Heart left ventricle (tissue), 16 donors: ENCODE measurements at regions of chr17 and their contacts with region 1.

Region 1: DNA sequence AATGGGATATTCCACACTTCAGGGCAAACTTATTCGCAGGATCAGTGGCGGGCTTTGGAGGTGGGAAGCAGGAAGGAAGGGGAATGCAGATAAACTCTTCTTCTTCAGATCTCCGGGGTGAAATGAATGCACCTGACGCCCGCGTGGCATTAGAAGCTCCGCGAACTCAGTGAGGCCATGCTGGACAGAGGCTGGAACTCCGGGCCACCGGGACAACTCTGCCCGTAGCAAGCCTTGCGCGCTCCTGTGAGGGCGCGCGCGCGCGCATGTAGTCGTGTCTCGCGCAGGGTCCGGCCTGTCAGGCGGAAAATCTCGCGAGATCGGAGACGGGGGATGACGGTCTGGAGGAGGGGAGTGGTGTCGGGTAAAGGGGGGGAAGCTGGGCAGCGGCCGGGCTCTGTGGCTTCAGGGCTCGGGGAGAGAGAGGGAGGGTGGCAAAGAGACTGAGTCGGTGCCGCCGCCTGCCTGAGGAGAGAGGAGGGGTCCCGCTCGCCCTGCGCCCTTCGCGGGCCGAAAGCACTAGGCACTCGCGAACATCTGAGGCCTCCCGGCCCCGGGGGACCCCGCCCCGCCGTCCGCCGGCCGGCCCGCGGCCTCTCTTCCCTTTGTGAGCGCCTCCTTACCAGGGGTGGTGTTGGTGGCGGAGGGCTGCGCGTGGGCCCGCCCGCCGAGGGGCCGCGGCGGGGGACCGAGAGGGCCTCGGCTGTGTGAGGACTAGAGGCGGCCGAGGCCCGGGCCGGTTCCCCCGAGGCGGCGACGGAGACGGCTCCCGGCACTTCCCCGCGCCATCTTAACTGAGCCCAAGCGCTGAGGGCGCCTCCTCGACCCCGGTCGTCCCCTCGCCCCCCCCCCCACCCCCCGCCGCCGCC is at the start of gene TAOK1:
- DNase-seq: peak; percentile 99 to 100 (median 100)
- ATAC-seq: peak; percentile 97 to 99 (median 99)
- H3K4me3 ChIP-seq: peak within 1 kb of the TSS; percentile 68 to 100 (median 94)
- H3K27ac ChIP-seq: peak within 1 kb of the TSS; percentile 91 to 99 (median 98)
- H3K4me1 ChIP-seq: peaks cover 5 to 43% (median 28%) of the 10 kb centered on the region in 12 donors
- H3K27me3 ChIP-seq: no peaks in the 10 kb centered on the region
- CTCF ChIP-seq: peak in 1 of 12 donors; percentile 7
- POLR2A ChIP-seq: peak; percentile 85 to 94
- total RNA-seq, gene TAOK1: 41.7 to 81.2 (median 62.9) TPM

Region 2: GRCh38 chr17:29461483-29462206 is 71.4 kb after region 1 on chr17:
- intact Hi-C with region 1: loop called in 3 of 10 experiments (anchors 5 to 10 kb)
- DNase-seq: no peak
- ATAC-seq: peak in 1 of 4 donors; percentile 74
- H3K4me3 ChIP-seq: no peak overlapping the region
- H3K27ac ChIP-seq: peak overlapping the region in 1 of 12 donors; percentile 12
- H3K4me1 ChIP-seq: peaks cover 0 to 35% (median 17%) of the 10 kb centered on the region in 12 donors
- H3K27me3 ChIP-seq: no peaks in the 10 kb centered on the region
- CTCF ChIP-seq: no peak
- POLR2A ChIP-seq: no peak

Region 3: DNA sequence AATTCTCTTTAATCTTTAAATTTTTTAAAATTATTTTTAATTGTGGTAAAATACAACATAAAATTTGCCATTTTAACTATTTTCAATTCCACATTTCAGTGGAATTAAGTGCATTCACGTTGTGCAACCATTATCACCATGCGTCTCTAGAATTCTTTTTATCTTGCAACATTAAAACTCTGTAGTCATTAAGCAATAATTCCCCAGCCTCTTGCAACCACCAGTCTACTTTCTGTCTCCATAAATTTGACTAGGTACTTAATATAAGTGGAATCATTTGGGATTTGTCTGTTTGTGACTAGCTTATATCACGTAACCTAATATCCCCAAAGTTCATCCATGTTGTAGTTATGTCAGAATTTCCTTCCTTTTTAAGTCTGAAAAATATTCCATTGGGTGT is 79.1 kb after region 1 on chr17:
- intact Hi-C with region 1: loop called in 3 of 10 experiments (anchors 5 to 10 kb)
- DNase-seq: no peak
- ATAC-seq: no peak
- H3K4me3 ChIP-seq: no peak overlapping the region
- H3K27ac ChIP-seq: no peak overlapping the region
- H3K4me1 ChIP-seq: no peaks in the 10 kb centered on the region
- H3K27me3 ChIP-seq: no peaks in the 10 kb centered on the region
- CTCF ChIP-seq: no peak
- POLR2A ChIP-seq: no peak

Region 4: DNA sequence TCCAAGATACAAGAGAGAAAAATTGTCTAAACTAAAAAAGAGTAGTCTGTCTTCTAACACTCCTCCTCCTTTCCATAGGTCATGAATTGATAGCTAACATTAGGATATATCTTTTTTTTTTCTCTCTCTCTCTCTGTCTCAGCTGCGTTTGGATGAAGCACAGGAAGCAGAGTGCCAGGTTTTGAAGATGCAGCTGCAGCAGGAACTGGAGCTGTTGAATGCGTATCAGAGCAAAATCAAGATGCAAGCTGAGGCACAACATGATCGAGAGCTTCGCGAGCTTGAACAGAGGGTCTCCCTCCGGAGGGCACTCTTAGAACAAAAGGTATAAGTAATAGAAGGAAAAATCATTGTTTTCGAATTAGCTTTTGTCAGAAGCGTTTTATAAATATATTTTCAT is 143.8 kb after region 1 on chr17:
- intact Hi-C with region 1: loop called in 1 of 10 experiments (anchors 5 kb)
- DNase-seq: no peak
- ATAC-seq: no peak
- H3K4me3 ChIP-seq: no peak overlapping the region
- H3K27ac ChIP-seq: no peak overlapping the region
- H3K4me1 ChIP-seq: no peaks in the 10 kb centered on the region
- H3K27me3 ChIP-seq: no peaks in the 10 kb centered on the region
- CTCF ChIP-seq: no peak
- POLR2A ChIP-seq: no peak